ENCODE measurements at regions of chr18 and their contacts with region 1.

Region 1: DNA sequence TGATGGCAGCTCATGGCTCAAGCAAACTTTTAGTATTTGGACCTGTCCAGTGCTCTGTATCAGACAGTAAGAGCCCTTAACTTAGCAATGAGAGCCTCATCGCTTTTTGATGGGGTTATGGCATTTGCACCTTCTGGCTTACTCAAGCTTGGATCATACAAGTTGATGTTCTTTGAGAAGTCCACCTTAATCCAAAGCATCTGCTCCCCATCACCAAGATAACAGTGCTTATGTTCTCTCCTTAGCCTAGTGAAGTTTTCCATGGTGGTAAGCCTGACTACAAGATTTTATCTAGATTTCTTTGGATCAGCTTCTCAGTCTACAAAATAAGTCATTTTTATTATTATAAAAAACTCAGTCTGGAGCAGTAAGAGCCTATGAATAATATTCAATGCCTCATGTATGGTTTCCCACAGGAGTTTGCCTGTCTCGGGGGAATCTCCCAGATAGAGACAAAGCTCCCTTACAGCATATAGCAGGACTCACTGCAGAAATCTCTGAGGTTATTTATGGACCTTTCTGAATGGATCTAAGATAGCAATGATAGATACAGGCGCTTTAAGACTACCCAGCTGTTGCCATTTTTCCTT is 472.2 kb upstream of the LINC00305 start:
- DNase-seq: no peak
- H3K4me3 ChIP-seq: no peak overlapping the region
- H3K27ac ChIP-seq: no peak overlapping the region
- H3K4me1 ChIP-seq: no peaks in the 10 kb centered on the region
- CTCF ChIP-seq: no peak

Region 2: DNA sequence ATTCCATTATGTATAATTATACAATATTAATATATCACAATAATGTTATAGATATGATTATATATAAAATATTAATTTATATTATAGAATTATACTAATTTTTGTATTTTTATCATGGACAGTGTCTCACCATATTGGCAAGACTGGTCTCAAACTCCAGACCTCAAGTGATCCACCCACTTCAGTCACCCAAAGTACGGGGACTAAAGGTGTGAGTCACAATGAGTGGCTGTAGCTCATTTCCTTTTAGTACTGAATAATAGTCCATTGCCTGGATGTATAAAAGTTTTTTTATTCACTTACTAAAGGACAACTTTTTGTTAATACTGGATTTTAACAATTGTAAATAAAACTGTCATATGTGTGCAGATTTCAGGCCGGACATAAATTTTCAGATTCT is 54.6 kb before region 1 on chr18:
- CTCF ChIA-PET with region 1: no interaction called
- POLR2A ChIA-PET with region 1: no interaction called
- intact Hi-C with region 1: loop called (anchors 10 kb)
- DNase-seq: no peak
- H3K4me3 ChIP-seq: no peak overlapping the region
- H3K27ac ChIP-seq: no peak overlapping the region
- H3K4me1 ChIP-seq: no peaks in the 10 kb centered on the region
- CTCF ChIP-seq: no peak

Region 3: DNA sequence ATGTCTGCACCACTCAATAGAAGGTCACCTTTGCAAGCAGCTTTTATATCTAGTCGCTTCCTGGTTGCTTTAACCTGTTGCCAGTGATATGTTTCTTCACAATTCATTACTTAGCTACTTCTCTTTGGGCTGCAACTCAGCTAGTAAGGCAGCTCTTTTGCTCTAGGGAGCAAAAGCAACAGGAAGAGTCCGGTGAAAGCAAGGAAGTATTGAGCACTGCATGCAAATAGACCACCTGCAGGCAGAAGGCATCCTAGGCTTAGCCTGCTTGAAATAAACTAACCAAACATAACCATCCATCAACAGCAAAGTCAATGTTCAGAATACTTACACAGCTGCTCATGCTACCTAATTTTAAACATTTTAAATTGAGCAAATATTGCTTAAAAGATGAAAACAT is 57.0 kb after region 1 on chr18:
- CTCF ChIA-PET with region 1: no interaction called
- POLR2A ChIA-PET with region 1: no interaction called
- intact Hi-C with region 1: no loop called
- DNase-seq: peak; percentile 80
- H3K4me3 ChIP-seq: peak overlapping the region; percentile 40
- H3K27ac ChIP-seq: peak overlapping the region; percentile 98
- H3K4me1 ChIP-seq: peaks cover 27% of the 10 kb centered on the region
- CTCF ChIP-seq: no peak

Region 4: GRCh38 chr18:64752707-64753106 is 131.6 kb after region 1 on chr18:
- CTCF ChIA-PET with region 1: no interaction called
- POLR2A ChIA-PET with region 1: no interaction called
- intact Hi-C with region 1: no loop called
- DNase-seq: no peak
- H3K4me3 ChIP-seq: no peak overlapping the region
- H3K27ac ChIP-seq: no peak overlapping the region
- H3K4me1 ChIP-seq: no peaks in the 10 kb centered on the region
- CTCF ChIP-seq: no peak